ENCODE measurements at regions of chr7 and their contacts with region 1.

Region 1: DNA sequence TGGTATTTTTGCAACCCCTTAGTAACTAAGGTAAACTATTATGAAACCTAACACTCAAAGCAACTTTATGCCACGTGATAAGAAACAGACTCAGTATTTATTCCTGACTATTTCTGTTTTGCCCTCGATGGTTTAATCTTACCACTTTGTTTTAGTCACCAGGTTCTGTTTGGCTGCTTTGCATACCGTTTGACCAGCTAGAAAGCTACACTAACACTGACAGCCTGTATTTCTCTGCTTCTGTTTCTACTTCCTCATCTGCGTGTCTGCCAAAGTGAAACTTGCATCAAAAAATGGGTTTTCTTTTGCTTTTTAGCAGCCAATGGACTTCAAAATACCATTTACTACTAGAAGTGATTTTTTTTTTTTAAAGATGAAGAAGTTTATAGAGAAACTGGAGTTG is 802.5 kb downstream of the GRM8 start:
- DNase-seq: no peak
- ATAC-seq: no peak
- H3K4me3 ChIP-seq: no peak overlapping the region
- H3K27ac ChIP-seq: no peak overlapping the region
- H3K4me1 ChIP-seq: no peaks in the 10 kb centered on the region
- H3K27me3 ChIP-seq: no peaks in the 10 kb centered on the region
- CTCF ChIP-seq: no peak
- POLR2A ChIP-seq: no peak

Region 2: GRCh38 chr7:126370038-126370668 is 80.1 kb before region 1 on chr7:
- in situ Hi-C with region 1: loop called in 1 of 4 experiments (anchors 25 kb)
- intact Hi-C with region 1: no loop called
- DNase-seq: no peak
- ATAC-seq: no peak
- H3K4me3 ChIP-seq: peak overlapping the region in 1 of 4 donors; percentile 6
- H3K27ac ChIP-seq: no peak overlapping the region
- H3K4me1 ChIP-seq: no peaks in the 10 kb centered on the region
- H3K27me3 ChIP-seq: no peaks in the 10 kb centered on the region
- CTCF ChIP-seq: no peak
- POLR2A ChIP-seq: no peak